SK-N-SH (cell line): ENCODE measurements at regions of chr7 and their contacts with region 1.

Region 1: GRCh38 chr7:120272261-120272660 is 714 bp upstream of the KCND2 start:
- DNase-seq: peak; percentile 72
- H3K4me3 ChIP-seq: peak overlapping the region; percentile 39 to 50
- H3K27ac ChIP-seq: no peak overlapping the region
- H3K4me1 ChIP-seq: peaks cover 4 to 8% of the 10 kb centered on the region in 2 experiments; a peak in 2 of 4 replicates
- H3K27me3 ChIP-seq: peaks cover 29% of the 10 kb centered on the region
- CTCF ChIP-seq: peak; percentile 96
- EP300 ChIP-seq: no peak
- RAD21 ChIP-seq: peak; percentile 78

Region 2: DNA sequence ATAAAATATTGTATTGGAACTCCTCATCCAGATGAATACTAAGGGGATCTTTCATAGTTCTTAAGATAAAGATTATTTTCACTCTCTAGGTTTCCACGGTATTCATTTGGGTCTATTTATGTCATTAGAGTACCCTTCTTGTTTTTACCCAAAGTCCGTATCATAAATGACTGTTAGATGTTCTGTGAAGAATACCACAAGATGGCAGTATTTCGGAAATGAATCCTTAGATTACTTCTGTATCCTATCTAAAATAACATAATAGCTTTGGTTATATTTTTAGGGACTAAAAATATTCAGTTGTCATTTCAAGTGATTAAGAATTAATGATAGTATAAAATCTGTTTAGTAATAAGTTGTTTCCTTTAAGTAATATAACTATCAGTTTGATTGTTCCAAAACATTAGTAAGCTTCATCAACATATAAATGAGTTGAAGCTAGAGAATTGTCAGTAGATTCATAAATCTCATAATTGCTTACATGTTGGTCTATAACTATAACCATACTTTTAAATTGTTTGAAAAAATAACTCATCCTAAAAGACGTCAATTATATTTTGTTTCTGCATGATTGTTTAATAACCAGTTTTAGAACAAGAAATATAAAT is 336.7 kb before region 1 on chr7:
- CTCF ChIA-PET with region 1: interaction called, 14 read pairs
- POLR2A ChIA-PET with region 1: no interaction called
- DNase-seq: peak; percentile 12
- H3K4me3 ChIP-seq: no peak overlapping the region
- H3K27ac ChIP-seq: no peak overlapping the region
- H3K4me1 ChIP-seq: no peaks in the 10 kb centered on the region
- H3K27me3 ChIP-seq: no peaks in the 10 kb centered on the region
- CTCF ChIP-seq: peak; percentile 82
- EP300 ChIP-seq: no peak
- RAD21 ChIP-seq: peak; percentile 53

Region 3: GRCh38 chr7:120502132-120502531 is 229.9 kb after region 1 on chr7:
- CTCF ChIA-PET with region 1: no interaction called
- POLR2A ChIA-PET with region 1: no interaction called
- DNase-seq: no peak
- H3K4me3 ChIP-seq: no peak overlapping the region
- H3K27ac ChIP-seq: no peak overlapping the region
- H3K4me1 ChIP-seq: no peaks in the 10 kb centered on the region
- H3K27me3 ChIP-seq: no peaks in the 10 kb centered on the region
- CTCF ChIP-seq: no peak
- EP300 ChIP-seq: no peak
- RAD21 ChIP-seq: no peak